CD4-positive, alpha-beta memory T cell (primary cell): ENCODE measurements at regions of chr1 and their contacts with region 1.

Region 1: GRCh38 chr1:151165738-151166505 is at the starts of genes LYSMD1 and SCNM1:
- DNase-seq: peak; percentile 97 to 98 (median 97)
- H3K4me3 ChIP-seq: peak within 1 kb of the TSS; percentile 91 to 99
- H3K4me3 Mint-ChIP-seq: peak within 1 kb of the TSS; percentile 94 to 100 (median 98)
- H3K27ac ChIP-seq: peak within 1 kb of the TSS; percentile 73
- H3K27ac Mint-ChIP-seq: peak within 1 kb of the TSS; percentile 93 to 99 (median 98)
- H3K4me1 ChIP-seq: peaks cover 42% of the 10 kb centered on the region
- H3K4me1 Mint-ChIP-seq: peaks cover 29 to 62% (median 47%) of the 10 kb centered on the region in 4 donors
- H3K27me3 ChIP-seq: no peaks in the 10 kb centered on the region
- H3K27me3 Mint-ChIP-seq: peaks cover 2% of the 10 kb centered on the region in 2 donors
- total RNA-seq, gene LYSMD1: 1.0 to 1.3 TPM
- total RNA-seq, gene SCNM1: 57.4 to 61.4 TPM

Region 2: GRCh38 chr1:151189638-151190445 is 23.9 kb after region 1 on chr1 and contains the start of gene VPS72:
- CTCF ChIA-PET with region 1: interaction called, 5 read pairs
- POLR2A ChIA-PET with region 1: interaction called, 46 read pairs
- intact Hi-C with region 1: loop called (anchors 1 kb)
- DNase-seq: peak; percentile 81 to 92 (median 84)
- H3K4me3 ChIP-seq: peak within 1 kb of the TSS; percentile 67 to 78
- H3K4me3 Mint-ChIP-seq: peak within 1 kb of the TSS; percentile 92 to 100 (median 98)
- H3K27ac ChIP-seq: peak within 1 kb of the TSS; percentile 89
- H3K27ac Mint-ChIP-seq: peak within 1 kb of the TSS; percentile 91 to 100 (median 98)
- H3K4me1 ChIP-seq: peaks cover 25% of the 10 kb centered on the region
- H3K4me1 Mint-ChIP-seq: peaks cover 22 to 43% (median 33%) of the 10 kb centered on the region in 4 donors
- H3K27me3 ChIP-seq: no peaks in the 10 kb centered on the region
- H3K27me3 Mint-ChIP-seq: no peaks in the 10 kb centered on the region
- total RNA-seq, gene VPS72: 68.1 to 68.4 TPM

Region 3: GRCh38 chr1:151198255-151199127 is 32.6 kb after region 1 on chr1 and contains the start of gene PIP5K1A:
- CTCF ChIA-PET with region 1: interaction called, 4 read pairs
- POLR2A ChIA-PET with region 1: interaction called, 4 read pairs
- intact Hi-C with region 1: loop called (anchors 1 kb)
- DNase-seq: peak; percentile 96 to 99 (median 98)
- H3K4me3 ChIP-seq: peak within 1 kb of the TSS; percentile 89 to 99
- H3K4me3 Mint-ChIP-seq: peak within 1 kb of the TSS; percentile 96 to 100 (median 98)
- H3K27ac ChIP-seq: peak within 1 kb of the TSS; percentile 79
- H3K27ac Mint-ChIP-seq: peak within 1 kb of the TSS; percentile 93 to 100 (median 97)
- H3K4me1 ChIP-seq: peaks cover 34% of the 10 kb centered on the region
- H3K4me1 Mint-ChIP-seq: peaks cover 29 to 53% (median 41%) of the 10 kb centered on the region in 4 donors
- H3K27me3 ChIP-seq: no peaks in the 10 kb centered on the region
- H3K27me3 Mint-ChIP-seq: peaks cover 0 to 2% of the 10 kb centered on the region in 2 donors
- total RNA-seq, gene PIP5K1A: 50.8 to 53.1 TPM